ENCODE measurements at regions of chr22 and their contacts with region 1.

Region 1: DNA sequence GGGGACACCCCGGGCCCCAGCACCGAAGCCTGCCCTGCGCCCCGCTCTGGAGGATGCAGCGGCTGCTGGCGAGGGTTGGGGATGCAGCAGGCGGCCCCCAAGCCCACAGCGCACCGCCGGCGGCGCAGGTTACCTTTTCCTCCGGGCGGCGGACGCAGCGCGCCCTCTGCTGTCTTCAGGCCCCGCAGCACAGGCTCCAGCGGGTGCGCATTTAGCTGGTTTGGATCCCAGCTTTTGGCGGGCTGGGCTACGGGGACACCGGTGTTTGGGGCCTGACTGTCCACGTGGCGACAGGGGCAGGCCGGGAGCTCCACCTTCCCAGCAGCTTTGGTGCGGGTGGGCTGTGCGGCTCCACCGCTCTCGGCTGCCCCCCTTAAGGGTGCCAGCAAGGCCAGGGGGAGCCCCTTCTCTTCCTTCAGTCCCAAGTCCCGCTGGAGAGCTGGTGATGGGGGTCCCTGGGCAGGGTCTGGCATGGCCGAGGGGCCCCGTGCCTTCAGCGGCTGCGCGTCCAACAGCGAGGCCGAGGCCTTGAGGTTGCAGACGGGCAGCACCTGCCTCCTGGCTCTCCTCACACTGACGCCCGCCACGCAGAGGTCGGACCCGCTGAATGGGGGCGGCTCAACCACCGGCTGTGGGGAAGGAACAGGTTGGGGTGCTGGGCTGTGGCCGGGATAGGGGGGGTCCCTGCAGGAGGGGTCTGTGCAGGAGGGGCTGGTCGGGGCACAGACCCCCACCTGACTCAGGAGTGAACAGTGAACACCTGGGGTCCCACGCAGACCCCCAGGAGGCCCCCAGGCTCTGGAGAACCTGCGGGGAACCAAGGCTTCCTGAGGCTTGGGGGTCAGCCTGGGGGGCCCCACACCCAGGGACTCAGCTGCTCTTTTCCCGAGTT is 18.0 kb upstream of the IL17REL start:
- DNase-seq: peak; percentile 89
- H3K4me3 Mint-ChIP-seq: no peak overlapping the region
- H3K27ac Mint-ChIP-seq: no peak overlapping the region
- H3K4me1 Mint-ChIP-seq: peaks cover 24% of the 10 kb centered on the region
- H3K27me3 Mint-ChIP-seq: peaks cover 11% of the 10 kb centered on the region

Region 2: DNA sequence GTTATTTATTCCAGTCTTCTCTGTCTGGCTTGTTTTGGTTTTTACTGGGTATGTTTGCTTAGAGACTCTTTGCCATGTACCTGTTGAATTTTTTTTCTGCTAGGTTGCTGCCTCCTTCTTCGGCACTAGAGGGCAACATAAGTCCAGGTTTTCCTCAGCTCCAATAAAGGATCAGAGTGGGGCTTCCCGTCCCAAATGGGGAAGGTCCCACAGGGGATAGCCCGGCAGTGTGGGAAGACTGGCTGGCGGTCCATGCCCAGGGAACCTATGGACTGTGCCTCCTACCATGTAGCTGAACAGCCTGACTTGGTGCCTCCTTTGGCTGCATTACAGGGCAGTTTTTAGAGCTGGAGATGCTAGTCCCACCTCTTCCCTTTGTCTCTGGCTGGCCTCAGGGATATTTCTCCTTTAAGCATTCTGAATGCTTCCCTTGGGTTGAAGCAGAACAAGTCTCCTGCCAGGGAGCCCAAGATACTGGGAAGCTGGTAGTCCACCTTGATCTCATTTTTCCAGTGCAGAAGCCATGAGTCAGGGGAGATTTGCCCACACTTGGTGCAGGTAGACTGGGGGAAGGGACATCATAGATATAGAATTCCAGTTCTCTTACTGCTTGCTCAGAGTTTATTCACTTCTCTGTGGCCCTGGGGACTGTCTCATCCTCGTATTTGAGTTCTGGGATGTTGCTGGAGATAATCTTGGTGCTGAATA is 263.0 kb before region 1 on chr22:
- CTCF ChIA-PET with region 1: interaction called, 39 read pairs
- POLR2A ChIA-PET with region 1: interaction called, 6 read pairs
- DNase-seq: peak; percentile 44
- H3K4me3 Mint-ChIP-seq: no peak overlapping the region
- H3K27ac Mint-ChIP-seq: no peak overlapping the region
- H3K4me1 Mint-ChIP-seq: peaks cover 6% of the 10 kb centered on the region
- H3K27me3 Mint-ChIP-seq: no peaks in the 10 kb centered on the region

Region 3: DNA sequence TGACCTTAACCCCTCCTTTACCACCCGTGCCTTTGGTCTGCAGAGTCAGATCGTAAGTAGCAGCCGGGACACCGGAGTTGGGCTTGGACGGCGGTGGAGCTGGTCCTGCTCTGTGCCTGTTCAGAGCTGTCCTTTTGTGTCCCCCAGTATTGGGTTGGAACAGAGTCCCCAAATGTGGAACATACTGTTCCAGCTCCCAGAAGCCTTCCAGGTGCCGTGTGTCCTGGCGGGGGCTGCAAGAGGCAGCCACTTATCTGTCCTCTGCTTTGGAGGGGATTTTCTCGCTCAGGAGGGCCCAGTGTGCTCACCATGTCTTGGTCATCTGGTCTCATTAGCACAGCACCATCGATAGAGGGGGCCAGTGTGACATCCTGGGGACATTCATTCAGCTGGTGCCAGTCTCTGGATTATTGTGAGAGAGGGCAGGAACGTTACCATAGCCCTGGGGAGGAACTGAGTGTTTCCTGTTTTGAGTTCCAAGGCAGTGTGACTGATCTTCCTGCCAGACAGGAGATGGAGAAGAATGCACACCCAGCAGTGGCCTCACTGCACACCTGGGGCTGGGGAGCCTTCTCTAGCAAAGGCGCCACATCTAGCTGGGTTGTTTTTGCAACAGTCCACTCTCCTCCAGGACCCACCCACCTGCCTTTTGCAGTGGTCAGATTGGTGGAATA is 99.7 kb before region 1 on chr22:
- CTCF ChIA-PET with region 1: interaction called, 58 read pairs
- POLR2A ChIA-PET with region 1: interaction called, 21 read pairs
- DNase-seq: peak; percentile 58
- H3K4me3 Mint-ChIP-seq: no peak overlapping the region
- H3K27ac Mint-ChIP-seq: peak overlapping the region; percentile 37
- H3K4me1 Mint-ChIP-seq: peaks cover 48% of the 10 kb centered on the region
- H3K27me3 Mint-ChIP-seq: no peaks in the 10 kb centered on the region

Region 4: GRCh38 chr22:49992921-49993648 is 37.5 kb before region 1 on chr22:
- CTCF ChIA-PET with region 1: interaction called, 21 read pairs
- POLR2A ChIA-PET with region 1: no interaction called
- DNase-seq: peak; percentile 69
- H3K4me3 Mint-ChIP-seq: no peak overlapping the region
- H3K27ac Mint-ChIP-seq: no peak overlapping the region
- H3K4me1 Mint-ChIP-seq: peaks cover 7% of the 10 kb centered on the region
- H3K27me3 Mint-ChIP-seq: peaks cover 14% of the 10 kb centered on the region

Region 5: DNA sequence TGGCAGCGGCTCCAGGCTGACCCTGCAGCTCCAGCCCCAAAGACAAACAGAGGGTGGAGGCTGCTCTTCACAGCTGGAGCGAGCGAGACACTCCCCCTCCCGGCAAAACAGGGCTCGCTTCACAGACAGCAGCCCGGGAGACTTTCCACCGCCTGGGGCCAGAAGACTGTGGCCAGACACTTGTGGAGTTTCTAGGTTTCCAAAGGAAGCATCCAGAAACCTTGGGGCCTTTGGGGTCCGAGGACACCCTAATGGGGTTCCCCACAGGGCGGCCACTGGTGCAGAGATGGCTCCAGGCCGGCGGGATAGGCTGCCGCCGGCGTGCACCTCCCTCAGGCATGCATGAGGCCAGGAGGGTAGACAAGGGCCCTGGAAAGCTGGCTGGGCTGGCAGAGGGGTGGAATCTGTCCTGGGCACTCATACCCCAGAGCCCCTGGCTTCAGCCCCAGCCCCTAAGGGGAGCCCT is 17.8 kb before region 1 on chr22 and contains the start of gene IL17REL:
- CTCF ChIA-PET with region 1: no interaction called
- POLR2A ChIA-PET with region 1: no interaction called
- DNase-seq: no peak
- H3K4me3 Mint-ChIP-seq: no peak within 1 kb of the TSS
- H3K27ac Mint-ChIP-seq: peak within 1 kb of the TSS; percentile 61
- H3K4me1 Mint-ChIP-seq: peaks cover 34% of the 10 kb centered on the region
- H3K27me3 Mint-ChIP-seq: peaks cover 19% of the 10 kb centered on the region
- total RNA-seq, gene IL17REL: not detected

Measured in activated CD4-positive, alpha-beta memory T cell treated with anti-CD3 and anti-CD28 coated beads, Interleukin-2, amount 10 ng/mL, durations not matched to agents 7 days and 5 days (primary cell).